GM12878 (cell line): ENCODE measurements at regions of chr4 and their contacts with region 1.

Region 1: GRCh38 chr4:173257732-173258717 is 76.1 kb downstream of the HMGB2 start:
- DNase-seq: no peak
- ATAC-seq: peak; percentile 92
- H3K4me3 ChIP-seq: no peak overlapping the region
- H3K27ac ChIP-seq: no peak overlapping the region
- H3K4me1 ChIP-seq: peaks cover 15% of the 10 kb centered on the region
- H3K27me3 ChIP-seq: no peaks in the 10 kb centered on the region
- CTCF ChIP-seq: peak; percentile 83 to 95 (median 91)
- EP300 ChIP-seq: no peak
- POLR2A ChIP-seq: no peak
- RAD21 ChIP-seq: peak; percentile 96

Region 2: DNA sequence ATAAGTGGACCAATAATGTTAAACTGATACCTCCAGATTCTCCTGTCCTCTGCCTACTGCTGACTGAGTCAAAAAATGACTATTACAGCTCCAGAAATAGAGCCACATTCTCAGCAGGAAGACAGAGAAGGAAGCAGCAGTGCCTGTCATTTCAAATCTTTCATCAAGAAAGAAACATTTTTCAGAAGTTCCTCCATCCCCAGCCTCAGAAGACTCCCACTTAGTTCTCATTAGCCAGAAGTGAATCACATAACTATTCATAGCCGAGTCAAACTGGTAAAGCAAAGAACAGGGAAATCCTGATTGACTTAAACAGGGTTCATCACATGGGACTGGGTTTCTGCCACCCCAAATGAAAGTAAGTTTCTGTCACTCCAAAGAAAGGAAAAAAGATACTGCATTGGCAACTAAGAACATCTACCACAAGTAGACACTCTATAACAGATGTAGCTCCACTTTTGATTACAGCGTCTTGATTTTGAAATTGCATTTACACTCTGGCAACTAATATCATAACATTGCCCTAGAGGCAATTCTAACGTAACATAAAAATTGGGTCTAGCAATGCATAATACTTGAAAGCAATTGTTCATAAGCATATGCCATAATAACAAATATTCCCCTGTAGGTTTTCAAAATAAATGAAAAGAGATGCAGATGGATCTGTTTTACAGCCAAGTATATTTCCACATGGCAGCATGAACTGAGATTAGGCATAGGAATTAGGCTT is 845.0 kb before region 1 on chr4:
- CTCF ChIA-PET with region 1: no interaction called
- POLR2A ChIA-PET with region 1: no interaction called
- RAD21 ChIA-PET with region 1: no interaction called
- SMC1A ChIA-PET with region 1: no interaction called
- in situ Hi-C with region 1: no loop called
- intact Hi-C with region 1: no loop called
- DNase-seq: no peak
- ATAC-seq: no peak
- H3K4me3 ChIP-seq: no peak overlapping the region
- H3K27ac ChIP-seq: no peak overlapping the region
- H3K4me1 ChIP-seq: no peaks in the 10 kb centered on the region
- H3K27me3 ChIP-seq: no peaks in the 10 kb centered on the region
- CTCF ChIP-seq: no peak
- EP300 ChIP-seq: no peak
- POLR2A ChIP-seq: no peak
- RAD21 ChIP-seq: no peak

Region 3: GRCh38 chr4:173025131-173025530 is 232.9 kb before region 1 on chr4:
- CTCF ChIA-PET with region 1: interaction called, 127 read pairs
- POLR2A ChIA-PET with region 1: interaction called, 7 read pairs
- RAD21 ChIA-PET with region 1: interaction called, 52 read pairs
- SMC1A ChIA-PET with region 1: interaction called, 87 read pairs
- in situ Hi-C with region 1: no loop called
- intact Hi-C with region 1: loop called (anchors 1 kb)
- DNase-seq: peak; percentile 16
- ATAC-seq: peak; percentile 95
- H3K4me3 ChIP-seq: no peak overlapping the region
- H3K27ac ChIP-seq: no peak overlapping the region
- H3K4me1 ChIP-seq: no peaks in the 10 kb centered on the region
- H3K27me3 ChIP-seq: no peaks in the 10 kb centered on the region; a peak in 1 of 4 replicates
- CTCF ChIP-seq: peak; percentile 54 to 63 (median 58); a peak in 5 of 6 replicates
- EP300 ChIP-seq: no peak
- POLR2A ChIP-seq: no peak
- RAD21 ChIP-seq: peak; percentile 91

Region 4: GRCh38 chr4:173174594-173175012 is 83.4 kb before region 1 on chr4:
- CTCF ChIA-PET with region 1: interaction called, 30 read pairs
- POLR2A ChIA-PET with region 1: interaction called, 14 read pairs
- RAD21 ChIA-PET with region 1: interaction called, 14 read pairs
- SMC1A ChIA-PET with region 1: interaction called, 13 read pairs
- in situ Hi-C with region 1: no loop called
- intact Hi-C with region 1: loop called (anchors 2 kb)
- DNase-seq: no peak
- ATAC-seq: no peak
- H3K4me3 ChIP-seq: no peak overlapping the region
- H3K27ac ChIP-seq: no peak overlapping the region
- H3K4me1 ChIP-seq: peaks cover 11% of the 10 kb centered on the region
- H3K27me3 ChIP-seq: no peaks in the 10 kb centered on the region
- CTCF ChIP-seq: no peak
- EP300 ChIP-seq: no peak
- POLR2A ChIP-seq: no peak
- RAD21 ChIP-seq: no peak

Region 5: GRCh38 chr4:173237152-173237551 is 20.9 kb before region 1 on chr4:
- CTCF ChIA-PET with region 1: interaction called, 5 read pairs
- POLR2A ChIA-PET with region 1: no interaction called
- RAD21 ChIA-PET with region 1: interaction called, 5 read pairs
- SMC1A ChIA-PET with region 1: interaction called, 14 read pairs
- in situ Hi-C with region 1: no loop called
- intact Hi-C with region 1: no loop called
- DNase-seq: no peak
- ATAC-seq: no peak
- H3K4me3 ChIP-seq: no peak overlapping the region
- H3K27ac ChIP-seq: no peak overlapping the region
- H3K4me1 ChIP-seq: no peaks in the 10 kb centered on the region
- H3K27me3 ChIP-seq: no peaks in the 10 kb centered on the region
- CTCF ChIP-seq: no peak
- EP300 ChIP-seq: no peak
- POLR2A ChIP-seq: no peak
- RAD21 ChIP-seq: no peak

Region 6: GRCh38 chr4:173280998-173281397 is 23.0 kb after region 1 on chr4:
- CTCF ChIA-PET with region 1: interaction called, 15 read pairs
- POLR2A ChIA-PET with region 1: no interaction called
- RAD21 ChIA-PET with region 1: interaction called, 3 read pairs
- SMC1A ChIA-PET with region 1: interaction called, 17 read pairs
- in situ Hi-C with region 1: no loop called
- intact Hi-C with region 1: no loop called
- DNase-seq: no peak
- ATAC-seq: peak; percentile 47; the same call in 2 of the 3 replicates
- H3K4me3 ChIP-seq: no peak overlapping the region
- H3K27ac ChIP-seq: no peak overlapping the region
- H3K4me1 ChIP-seq: no peaks in the 10 kb centered on the region
- H3K27me3 ChIP-seq: no peaks in the 10 kb centered on the region
- CTCF ChIP-seq: peak; percentile 15 to 17 (median 16); a peak in 2 of 6 replicates
- EP300 ChIP-seq: no peak
- POLR2A ChIP-seq: no peak
- RAD21 ChIP-seq: peak; percentile 36

Region 7: GRCh38 chr4:175246941-175247340 is 1988.9 kb after region 1 on chr4:
- CTCF ChIA-PET with region 1: no interaction called
- POLR2A ChIA-PET with region 1: no interaction called
- RAD21 ChIA-PET with region 1: no interaction called
- SMC1A ChIA-PET with region 1: no interaction called
- in situ Hi-C with region 1: no loop called
- intact Hi-C with region 1: no loop called
- DNase-seq: no peak
- ATAC-seq: no peak
- H3K4me3 ChIP-seq: no peak overlapping the region
- H3K27ac ChIP-seq: no peak overlapping the region
- H3K4me1 ChIP-seq: no peaks in the 10 kb centered on the region
- H3K27me3 ChIP-seq: no peaks in the 10 kb centered on the region
- CTCF ChIP-seq: no peak
- EP300 ChIP-seq: no peak
- POLR2A ChIP-seq: no peak
- RAD21 ChIP-seq: no peak